Activated CD8-positive, alpha-beta T cell treated with anti-CD3 and anti-CD28 coated beads, Interleukin-2, amount 10 ng/mL, durations not matched to agents 7 days and 5 days (primary cell): ENCODE measurements at regions of chr2 and their contacts with region 1.

Region 1: DNA sequence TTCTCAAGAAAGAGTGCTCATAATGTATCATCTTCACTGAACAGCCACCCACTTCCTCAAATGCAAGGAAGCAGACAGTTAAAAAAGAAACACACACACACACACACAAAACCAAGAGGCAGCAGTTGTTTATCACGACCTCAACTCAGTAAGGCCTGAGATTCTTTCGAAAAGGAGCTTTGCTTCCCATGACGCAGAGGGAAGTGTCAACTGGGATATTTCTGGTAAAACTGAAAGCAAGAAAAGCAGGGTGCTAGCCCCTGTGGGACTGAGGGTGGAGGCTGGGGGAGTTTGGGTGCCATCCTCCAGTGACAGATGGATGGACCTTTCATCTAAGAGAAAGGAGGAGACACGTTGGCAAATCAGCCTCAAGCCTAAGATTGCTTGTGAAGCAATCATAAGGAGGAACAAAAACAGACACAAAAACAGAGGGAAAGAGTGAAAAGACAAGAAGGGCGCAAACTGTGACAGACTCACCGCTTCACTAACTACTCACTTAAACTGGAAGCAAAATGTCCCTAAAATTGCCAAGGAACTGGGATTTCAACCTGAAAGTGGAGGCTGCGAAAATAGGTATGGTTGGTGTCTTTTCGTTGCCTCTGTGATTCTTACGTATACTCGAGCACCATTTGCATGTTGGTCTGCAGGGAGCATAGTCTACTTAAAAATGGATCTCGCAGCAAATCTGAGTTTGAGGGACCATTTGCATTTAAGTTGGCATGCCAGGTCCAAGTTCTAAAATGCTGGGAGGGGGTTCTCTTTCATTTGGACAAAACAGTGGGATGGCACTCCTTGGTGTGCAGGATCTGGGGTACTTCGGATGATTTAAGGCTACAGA is at the start of gene ARHGAP25:
- DNase-seq: peak; percentile 67
- ATAC-seq: peak; percentile 59
- H3K4me3 Mint-ChIP-seq: no peak within 1 kb of the TSS
- H3K27ac Mint-ChIP-seq: no peak within 1 kb of the TSS
- H3K4me1 Mint-ChIP-seq: peaks cover 35% of the 10 kb centered on the region
- H3K27me3 Mint-ChIP-seq: no peaks in the 10 kb centered on the region
- total RNA-seq, gene ARHGAP25: 68.2 to 68.7 TPM

Region 2: DNA sequence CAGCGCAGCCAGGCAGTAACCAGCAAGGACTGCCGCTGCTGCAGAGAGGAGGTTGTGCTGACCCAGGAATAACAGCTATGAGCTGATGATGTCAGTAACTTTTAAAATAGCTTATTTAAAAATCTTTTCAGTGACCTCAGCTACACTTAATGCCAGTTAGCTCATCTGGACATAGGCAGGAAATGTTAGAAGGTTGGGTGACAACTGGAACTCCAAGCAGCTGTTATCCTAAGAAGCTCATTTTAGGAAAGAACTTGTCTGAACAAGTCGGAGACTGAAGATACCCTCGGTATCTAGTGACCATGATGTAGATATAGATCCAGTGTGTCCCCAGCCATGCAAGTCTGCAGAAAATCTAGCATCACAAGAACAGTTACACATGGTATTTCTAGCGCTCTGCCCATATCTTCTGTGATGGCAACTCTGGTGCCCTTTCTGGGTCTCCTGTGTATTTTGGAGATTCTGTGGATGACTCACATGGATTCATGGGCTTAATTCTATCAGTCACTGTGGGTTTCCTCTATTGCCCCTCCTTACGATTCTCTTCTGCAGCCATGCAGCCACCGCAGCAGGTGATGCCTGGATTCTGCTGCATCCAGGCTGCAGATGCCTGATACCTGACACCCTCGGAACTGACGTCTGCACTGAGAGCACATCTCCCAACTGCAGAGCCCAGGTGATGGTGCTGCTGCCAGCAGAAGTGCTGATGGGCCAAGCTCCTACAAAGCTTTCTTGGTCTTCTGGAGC is 389.6 kb before region 1 on chr2:
- CTCF ChIA-PET with region 1: no interaction called
- POLR2A ChIA-PET with region 1: no interaction called
- DNase-seq: no peak
- ATAC-seq: no peak
- H3K4me3 Mint-ChIP-seq: no peak overlapping the region
- H3K27ac Mint-ChIP-seq: no peak overlapping the region
- H3K4me1 Mint-ChIP-seq: no peaks in the 10 kb centered on the region
- H3K27me3 Mint-ChIP-seq: peaks cover 44% of the 10 kb centered on the region

Region 3: GRCh38 chr2:68620772-68621171 is 114.1 kb before region 1 on chr2:
- CTCF ChIA-PET with region 1: no interaction called
- POLR2A ChIA-PET with region 1: no interaction called
- DNase-seq: no peak
- ATAC-seq: no peak
- H3K4me3 Mint-ChIP-seq: no peak overlapping the region
- H3K27ac Mint-ChIP-seq: no peak overlapping the region
- H3K4me1 Mint-ChIP-seq: no peaks in the 10 kb centered on the region
- H3K27me3 Mint-ChIP-seq: no peaks in the 10 kb centered on the region

Region 4: GRCh38 chr2:68715353-68716041 is 19.4 kb before region 1 on chr2:
- CTCF ChIA-PET with region 1: interaction called, 449 read pairs
- POLR2A ChIA-PET with region 1: interaction called, 21 read pairs
- DNase-seq: peak; percentile 39
- ATAC-seq: no peak
- H3K4me3 Mint-ChIP-seq: no peak overlapping the region
- H3K27ac Mint-ChIP-seq: peak overlapping the region; percentile 85
- H3K4me1 Mint-ChIP-seq: peaks cover 82% of the 10 kb centered on the region
- H3K27me3 Mint-ChIP-seq: peaks cover 3% of the 10 kb centered on the region

Region 5: DNA sequence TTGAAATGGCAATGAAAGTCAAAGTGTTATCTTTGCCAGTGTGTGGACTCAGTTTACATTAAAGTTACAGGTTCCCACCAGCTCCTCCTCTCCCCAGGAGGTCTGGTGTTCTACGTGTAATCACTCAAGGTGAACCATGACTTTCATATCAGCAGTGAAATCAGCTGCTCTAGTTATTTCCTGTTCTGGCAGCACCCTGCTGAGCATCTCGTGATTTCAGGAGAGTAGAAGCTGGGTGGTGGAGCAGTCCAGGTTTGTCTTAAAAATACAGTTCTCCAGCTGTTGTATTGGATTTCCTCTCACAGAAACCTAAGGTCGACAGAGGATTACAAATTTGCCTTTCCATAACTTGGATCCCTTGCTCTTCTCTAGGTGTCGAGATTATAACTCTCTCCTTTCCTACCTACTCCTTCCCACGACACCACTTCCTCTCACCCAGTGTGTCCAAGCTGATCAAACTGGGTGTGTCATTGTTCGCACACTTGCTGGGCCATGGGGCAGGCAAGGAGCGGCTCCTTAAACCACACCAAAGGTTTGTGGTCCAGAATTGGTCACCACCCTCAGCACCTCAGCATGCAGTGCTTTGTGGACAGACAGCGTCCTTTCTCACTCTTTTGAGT is 13.3 kb before region 1 on chr2:
- CTCF ChIA-PET with region 1: interaction called, 449 read pairs
- POLR2A ChIA-PET with region 1: interaction called, 21 read pairs
- DNase-seq: peak; percentile 68
- ATAC-seq: peak; percentile 72
- H3K4me3 Mint-ChIP-seq: peak overlapping the region; percentile 46
- H3K27ac Mint-ChIP-seq: peak overlapping the region; percentile 91
- H3K4me1 Mint-ChIP-seq: peaks cover 98% of the 10 kb centered on the region
- H3K27me3 Mint-ChIP-seq: no peaks in the 10 kb centered on the region

Region 6: DNA sequence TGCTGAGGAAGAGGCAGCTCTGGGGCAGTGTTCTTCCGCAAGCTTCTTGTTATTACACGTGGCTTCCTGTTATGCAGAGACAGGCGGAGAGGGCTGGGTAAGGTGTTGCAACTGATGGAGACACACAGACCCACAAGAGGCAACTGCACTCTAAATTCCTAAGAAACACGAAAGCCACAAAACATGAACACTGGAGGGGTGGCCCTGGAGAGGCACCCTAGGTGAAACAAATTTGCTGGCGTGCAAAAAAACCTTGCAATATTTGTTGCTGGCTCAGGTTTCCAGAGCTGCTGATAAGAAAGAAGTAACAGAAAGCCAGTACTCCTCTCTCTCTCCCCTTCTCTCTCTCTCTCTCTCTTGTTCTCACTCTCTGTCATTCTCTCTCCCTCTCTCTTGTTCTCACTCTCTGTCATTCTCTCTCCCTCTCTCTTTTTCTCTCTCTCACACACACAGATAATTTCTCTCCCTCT is 31.5 kb after region 1 on chr2:
- CTCF ChIA-PET with region 1: interaction called, 15 read pairs
- POLR2A ChIA-PET with region 1: interaction called, 28 read pairs
- DNase-seq: peak; percentile 82
- ATAC-seq: peak; percentile 79
- H3K4me3 Mint-ChIP-seq: peak overlapping the region; percentile 83
- H3K27ac Mint-ChIP-seq: peak overlapping the region; percentile 97
- H3K4me1 Mint-ChIP-seq: peaks cover 91% of the 10 kb centered on the region
- H3K27me3 Mint-ChIP-seq: no peaks in the 10 kb centered on the region

Region 7: GRCh38 chr2:68828887-68829708 is 94.2 kb after region 1 on chr2:
- CTCF ChIA-PET with region 1: interaction called, 10 read pairs
- POLR2A ChIA-PET with region 1: no interaction called
- DNase-seq: peak; percentile 83
- ATAC-seq: peak; percentile 70
- H3K4me3 Mint-ChIP-seq: peak overlapping the region; percentile 71
- H3K27ac Mint-ChIP-seq: peak overlapping the region; percentile 90
- H3K4me1 Mint-ChIP-seq: peaks cover 65% of the 10 kb centered on the region
- H3K27me3 Mint-ChIP-seq: no peaks in the 10 kb centered on the region

Region 8: GRCh38 chr2:68837164-68837860 is 102.4 kb after region 1 on chr2:
- CTCF ChIA-PET with region 1: interaction called, 15 read pairs
- POLR2A ChIA-PET with region 1: no interaction called
- DNase-seq: peak; percentile 80
- ATAC-seq: peak; percentile 82
- H3K4me3 Mint-ChIP-seq: no peak overlapping the region
- H3K27ac Mint-ChIP-seq: no peak overlapping the region
- H3K4me1 Mint-ChIP-seq: peaks cover 44% of the 10 kb centered on the region
- H3K27me3 Mint-ChIP-seq: no peaks in the 10 kb centered on the region